Endothelial cell of umbilical vein (primary cell): ENCODE measurements at regions of chr3 and their contacts with region 1.

Region 1: DNA sequence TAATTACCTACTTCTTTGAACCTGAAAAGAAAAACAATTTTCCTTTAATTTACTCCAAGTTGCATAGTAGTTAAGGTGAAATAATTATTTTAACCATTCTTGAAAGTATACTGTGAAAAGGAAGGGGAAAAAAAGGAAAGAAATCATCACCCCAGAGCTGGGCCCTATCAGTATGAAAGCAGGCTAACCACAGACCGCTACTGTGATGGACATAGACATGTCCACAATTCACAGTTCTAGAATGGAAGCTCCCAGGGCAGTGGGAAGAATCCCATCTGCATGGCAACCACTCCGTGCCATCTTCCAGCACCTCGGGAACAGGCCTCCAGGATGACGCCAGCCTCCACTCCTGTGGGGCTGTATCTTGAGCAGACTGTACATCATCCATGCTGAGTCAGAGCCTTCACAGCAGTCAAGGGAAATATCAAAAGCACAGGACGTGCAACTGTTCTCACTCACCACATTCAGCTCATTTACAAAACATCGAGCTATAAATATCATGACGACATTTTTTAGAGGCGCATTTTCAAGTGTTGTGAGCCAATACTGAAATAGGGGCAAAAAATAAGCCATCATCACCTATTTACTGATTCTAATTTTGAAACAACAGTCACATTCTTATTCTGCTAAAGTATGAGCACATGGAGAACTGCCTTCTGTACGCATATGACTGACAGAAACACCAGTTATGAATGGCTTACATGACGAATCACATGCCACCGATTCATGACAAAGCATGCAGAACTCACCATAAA is 119.7 kb downstream of the SNRK start:
- DNase-seq: no peak
- H3K4me3 ChIP-seq: no peak overlapping the region
- H3K27ac ChIP-seq: no peak overlapping the region
- H3K4me1 ChIP-seq: no peaks in the 10 kb centered on the region
- H3K27me3 ChIP-seq: no peaks in the 10 kb centered on the region
- CTCF ChIP-seq: no peak
- POLR2A ChIP-seq: no peak

Region 2: DNA sequence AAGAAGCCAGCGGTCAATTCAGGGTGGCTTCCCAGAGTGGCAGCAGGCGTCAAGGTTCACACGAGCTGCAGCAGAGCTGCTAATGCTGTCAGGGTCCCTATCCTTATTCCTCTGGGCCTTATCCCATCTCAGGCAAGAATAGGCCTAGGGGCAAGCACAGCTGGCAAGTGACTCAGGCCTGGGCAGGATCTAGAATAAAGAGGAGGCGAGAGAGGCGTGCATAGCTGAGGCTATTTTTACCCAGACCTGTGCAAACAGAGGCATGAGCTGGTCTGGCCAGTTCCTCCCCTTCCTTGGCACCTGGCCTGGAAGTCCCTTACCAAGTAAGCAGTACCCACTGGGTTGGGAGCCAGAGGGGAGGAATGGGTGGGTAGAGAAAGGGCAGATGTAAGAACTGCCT is 915.8 kb before region 1 on chr3:
- CTCF ChIA-PET with region 1: no interaction called
- POLR2A ChIA-PET with region 1: no interaction called
- dilution Hi-C with region 1: no loop called
- intact Hi-C with region 1: no loop called
- DNase-seq: peak; percentile 83
- H3K4me3 ChIP-seq: no peak overlapping the region
- H3K27ac ChIP-seq: peak overlapping the region; percentile 58
- H3K4me1 ChIP-seq: peaks cover 15% of the 10 kb centered on the region
- H3K27me3 ChIP-seq: peaks cover 0 to 2% of the 10 kb centered on the region in 2 experiments
- CTCF ChIP-seq: no peak
- POLR2A ChIP-seq: no peak

Region 3: DNA sequence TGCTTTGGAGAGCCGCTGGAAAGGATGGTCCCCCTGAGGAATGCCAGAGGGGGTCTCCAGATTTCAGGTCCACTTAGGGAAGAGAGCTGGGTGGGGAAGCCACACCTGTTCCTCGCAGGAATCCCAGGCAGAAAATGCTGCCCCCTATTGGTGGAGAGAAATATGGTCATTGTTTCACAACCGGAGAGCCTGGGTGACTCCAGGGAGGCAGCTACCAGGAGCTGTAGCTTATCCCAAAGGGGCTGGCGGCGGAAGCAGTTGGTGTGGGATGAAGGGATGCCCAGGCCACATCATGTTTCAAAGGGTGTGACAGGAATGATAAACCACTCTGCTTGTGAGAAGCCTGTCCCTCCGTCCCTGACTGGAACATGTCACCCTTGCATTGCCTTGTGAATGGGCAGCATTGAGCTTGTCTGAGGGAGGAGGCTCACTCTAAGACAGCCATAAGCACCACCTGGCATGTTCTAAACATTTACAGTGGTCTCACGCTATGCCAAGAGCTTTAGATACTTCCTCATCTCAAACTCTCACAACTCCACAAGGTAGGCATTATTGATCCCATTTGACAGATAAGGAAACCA is 334.7 kb before region 1 on chr3:
- CTCF ChIA-PET with region 1: no interaction called
- POLR2A ChIA-PET with region 1: no interaction called
- dilution Hi-C with region 1: no loop called
- intact Hi-C with region 1: no loop called
- DNase-seq: no peak
- H3K4me3 ChIP-seq: no peak overlapping the region
- H3K27ac ChIP-seq: no peak overlapping the region
- H3K4me1 ChIP-seq: no peaks in the 10 kb centered on the region
- H3K27me3 ChIP-seq: peaks cover 0 to 2% of the 10 kb centered on the region in 2 experiments
- CTCF ChIP-seq: peak; percentile 39 to 46
- POLR2A ChIP-seq: no peak

Region 4: DNA sequence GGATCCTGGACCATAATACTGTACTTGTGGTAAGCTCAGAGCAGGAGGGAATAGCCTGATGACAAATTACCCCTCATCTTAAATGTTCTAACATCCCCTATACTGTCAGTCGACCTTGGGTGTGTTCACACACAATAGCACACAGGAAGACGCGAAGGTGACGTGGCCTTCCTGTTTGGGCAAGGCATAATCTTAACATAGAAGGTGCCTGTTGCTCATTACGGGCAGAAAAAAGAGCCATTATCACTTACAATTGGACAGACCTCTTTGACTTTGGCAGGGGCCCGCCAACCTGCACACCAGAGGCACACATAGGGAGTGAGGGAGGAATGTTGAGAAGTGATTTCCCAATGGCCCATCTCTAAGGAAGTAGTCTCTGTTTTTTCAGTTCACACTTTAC is 71.5 kb after region 1 on chr3:
- CTCF ChIA-PET with region 1: no interaction called
- POLR2A ChIA-PET with region 1: interaction called, 10 read pairs
- dilution Hi-C with region 1: no loop called
- intact Hi-C with region 1: no loop called
- DNase-seq: peak; percentile 59
- H3K4me3 ChIP-seq: no peak overlapping the region
- H3K27ac ChIP-seq: peak overlapping the region; percentile 79
- H3K4me1 ChIP-seq: peaks cover 25% of the 10 kb centered on the region
- H3K27me3 ChIP-seq: no peaks in the 10 kb centered on the region
- CTCF ChIP-seq: no peak
- POLR2A ChIP-seq: no peak